HCT116 (cell line): ENCODE measurements at regions of chr20 and their contacts with region 1.

Region 1: DNA sequence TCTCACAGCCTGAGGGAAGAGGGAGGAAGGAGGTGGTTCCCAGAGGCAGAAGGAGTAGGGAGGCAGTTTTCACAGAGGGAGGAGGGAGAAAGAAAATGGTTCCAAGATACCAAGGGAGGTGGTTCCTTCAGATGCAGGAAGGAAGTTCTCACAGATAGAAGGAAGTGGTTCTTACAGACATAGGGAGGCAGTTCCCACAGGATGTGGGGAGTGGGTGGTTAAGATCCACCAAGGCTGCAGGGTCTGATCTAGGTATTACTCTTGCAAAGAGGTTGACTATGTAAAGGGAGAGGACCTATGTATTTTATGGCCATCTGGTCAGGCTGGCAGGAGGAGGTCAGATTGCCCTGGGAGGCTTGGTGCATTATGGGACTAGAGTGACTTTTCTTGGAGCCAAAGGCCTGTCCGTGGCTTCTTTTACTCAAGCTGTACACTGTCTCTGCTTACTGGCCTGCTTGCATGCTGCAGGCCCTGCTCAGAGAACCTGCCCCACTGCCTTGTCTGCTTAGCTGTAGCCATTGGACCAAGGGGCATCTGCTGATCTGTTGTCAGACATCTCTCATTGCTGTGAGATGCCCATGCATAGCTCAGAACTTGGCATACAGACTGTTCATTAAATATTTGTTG is 283.7 kb downstream of the DHX35 start:
- DNase-seq: no peak
- ATAC-seq: no peak
- H3K4me3 ChIP-seq: no peak overlapping the region
- H3K27ac ChIP-seq: no peak overlapping the region
- H3K4me1 ChIP-seq: no peaks in the 10 kb centered on the region
- H3K27me3 ChIP-seq: peaks cover 14% of the 10 kb centered on the region
- CTCF ChIP-seq: no peak
- POLR2A ChIP-seq: no peak
- RAD21 ChIP-seq: no peak

Region 2: DNA sequence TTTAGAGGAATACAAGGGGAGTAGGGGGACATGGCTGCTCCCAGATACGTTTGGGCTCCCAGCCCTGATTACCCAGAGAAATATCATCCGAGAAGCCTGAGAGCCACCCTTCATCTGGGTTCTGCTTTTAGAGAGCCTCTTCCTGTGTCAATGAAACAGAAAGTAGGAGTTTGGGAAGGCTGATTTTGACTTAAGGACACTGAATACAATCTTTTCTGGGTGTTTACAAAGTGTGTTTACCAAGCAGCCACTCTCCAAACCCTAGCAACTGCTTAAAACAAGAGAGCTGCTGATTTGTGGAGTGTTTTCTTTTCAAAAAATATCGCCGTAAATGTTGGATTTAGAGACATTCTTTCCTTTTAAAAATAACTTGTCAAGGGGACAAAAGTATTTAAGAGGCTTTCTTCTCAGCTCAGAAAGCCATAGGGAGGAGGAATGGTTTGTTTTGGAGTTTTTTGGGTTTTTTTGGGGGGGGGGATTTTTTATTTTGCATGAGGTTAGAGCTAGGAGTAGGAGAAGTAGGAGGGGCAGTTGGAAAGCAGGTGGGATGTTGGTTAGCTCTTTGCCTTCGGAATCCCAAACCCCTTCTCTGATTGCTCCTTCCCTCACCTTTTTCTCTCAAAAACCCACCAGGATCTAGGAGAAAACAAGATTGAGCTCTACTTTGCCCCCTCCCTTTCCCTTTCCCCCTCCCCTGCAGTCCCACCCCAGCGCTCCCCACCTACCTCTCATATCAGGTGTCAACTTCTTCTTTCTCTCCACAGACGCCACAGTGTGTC is 1430.9 kb after region 1 on chr20:
- CTCF ChIA-PET with region 1: no interaction called
- POLR2A ChIA-PET with region 1: no interaction called
- RAD21 ChIA-PET with region 1: interaction called in 1 of 2 experiments, 11 read pairs
- intact Hi-C with region 1: no loop called
- DNase-seq: no peak
- ATAC-seq: no peak
- H3K4me3 ChIP-seq: no peak overlapping the region
- H3K27ac ChIP-seq: no peak overlapping the region
- H3K4me1 ChIP-seq: peaks cover 6 to 8% of the 10 kb centered on the region in 2 experiments; a peak in 2 of 4 replicates
- H3K27me3 ChIP-seq: peaks cover 73% of the 10 kb centered on the region
- CTCF ChIP-seq: no peak
- POLR2A ChIP-seq: no peak
- RAD21 ChIP-seq: no peak